Activated CD4-positive, alpha-beta memory T cell treated with anti-CD3 and anti-CD28 coated beads for 36 hours (primary cell): ENCODE measurements at regions of chr1 and their contacts with region 1.

Region 1: GRCh38 chr1:167082511-167083027 is 7.6 kb downstream of the GPA33 start:
- DNase-seq: no peak
- H3K4me3 Mint-ChIP-seq: no peak overlapping the region
- H3K27ac Mint-ChIP-seq: no peak overlapping the region
- H3K4me1 Mint-ChIP-seq: peaks cover 4% of the 10 kb centered on the region
- H3K27me3 Mint-ChIP-seq: no peaks in the 10 kb centered on the region

Region 2: DNA sequence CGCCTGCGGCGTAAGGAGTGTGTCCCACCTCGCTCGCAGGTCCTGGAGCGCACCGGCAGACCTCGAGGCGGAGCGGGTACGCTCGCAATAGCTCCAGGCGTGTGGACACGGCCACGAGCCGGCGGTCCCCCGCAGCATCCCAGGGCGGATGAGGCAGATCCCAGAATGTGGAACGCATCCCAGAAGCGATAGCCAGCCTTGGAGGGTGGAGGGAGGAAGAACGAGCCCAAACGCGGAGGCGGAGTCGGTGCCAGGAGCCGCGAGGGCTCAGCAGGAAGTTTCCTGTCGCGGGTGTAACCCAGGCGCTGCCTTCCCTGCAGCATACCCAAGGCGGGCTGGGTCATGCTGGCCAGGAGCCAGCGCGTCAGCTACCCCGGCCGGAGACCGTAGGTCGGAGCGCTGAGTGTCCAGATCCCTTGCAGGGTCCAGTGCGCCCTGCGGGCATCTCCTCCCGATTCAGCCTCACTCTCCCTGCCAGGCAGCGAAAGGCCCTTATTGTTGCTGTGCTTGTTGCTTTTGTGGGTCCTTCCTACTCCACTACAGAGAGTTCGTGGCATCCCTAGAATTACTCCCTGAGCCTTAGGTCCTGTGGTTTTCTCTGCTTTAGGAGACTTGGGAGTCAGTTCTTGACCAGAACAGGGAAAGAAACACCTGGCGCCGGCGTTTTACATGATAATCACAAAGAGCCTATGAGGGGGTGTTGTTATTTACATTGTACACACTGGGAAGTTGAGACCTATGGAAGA is 39.0 kb after region 1 on chr1:
- CTCF ChIA-PET with region 1: interaction called, 4 read pairs
- POLR2A ChIA-PET with region 1: no interaction called
- intact Hi-C with region 1: loop called (anchors 5 kb)
- DNase-seq: peak; percentile 51
- H3K4me3 Mint-ChIP-seq: peak overlapping the region; percentile 74
- H3K27ac Mint-ChIP-seq: no peak overlapping the region
- H3K4me1 Mint-ChIP-seq: peaks cover 5% of the 10 kb centered on the region
- H3K27me3 Mint-ChIP-seq: no peaks in the 10 kb centered on the region

Region 3: GRCh38 chr1:167207940-167208623 is 125.5 kb after region 1 on chr1:
- CTCF ChIA-PET with region 1: no interaction called
- POLR2A ChIA-PET with region 1: no interaction called
- intact Hi-C with region 1: loop called (anchors 5 kb)
- DNase-seq: no peak
- H3K4me3 Mint-ChIP-seq: no peak overlapping the region
- H3K27ac Mint-ChIP-seq: peak overlapping the region; percentile 95
- H3K4me1 Mint-ChIP-seq: peaks cover 38% of the 10 kb centered on the region
- H3K27me3 Mint-ChIP-seq: peaks cover 5% of the 10 kb centered on the region

Region 4: GRCh38 chr1:167584581-167584980 is 502.0 kb after region 1 on chr1:
- CTCF ChIA-PET with region 1: no interaction called
- POLR2A ChIA-PET with region 1: no interaction called
- intact Hi-C with region 1: no loop called
- DNase-seq: no peak
- H3K4me3 Mint-ChIP-seq: no peak overlapping the region
- H3K27ac Mint-ChIP-seq: no peak overlapping the region
- H3K4me1 Mint-ChIP-seq: no peaks in the 10 kb centered on the region
- H3K27me3 Mint-ChIP-seq: no peaks in the 10 kb centered on the region